HCT116 (cell line): ENCODE measurements at regions of chr7 and their contacts with region 1.

Region 1: GRCh38 chr7:18590744-18591340 is 95.3 kb downstream of the HDAC9 start:
- DNase-seq: peak; percentile 27
- ATAC-seq: peak; percentile 72
- H3K4me3 ChIP-seq: no peak overlapping the region
- H3K27ac ChIP-seq: no peak overlapping the region
- H3K4me1 ChIP-seq: no peaks in the 10 kb centered on the region
- H3K27me3 ChIP-seq: no peaks in the 10 kb centered on the region
- CTCF ChIP-seq: peak; percentile 51 to 67 (median 55); a peak in 4 of 6 replicates
- POLR2A ChIP-seq: no peak
- RAD21 ChIP-seq: peak; percentile 76

Region 2: DNA sequence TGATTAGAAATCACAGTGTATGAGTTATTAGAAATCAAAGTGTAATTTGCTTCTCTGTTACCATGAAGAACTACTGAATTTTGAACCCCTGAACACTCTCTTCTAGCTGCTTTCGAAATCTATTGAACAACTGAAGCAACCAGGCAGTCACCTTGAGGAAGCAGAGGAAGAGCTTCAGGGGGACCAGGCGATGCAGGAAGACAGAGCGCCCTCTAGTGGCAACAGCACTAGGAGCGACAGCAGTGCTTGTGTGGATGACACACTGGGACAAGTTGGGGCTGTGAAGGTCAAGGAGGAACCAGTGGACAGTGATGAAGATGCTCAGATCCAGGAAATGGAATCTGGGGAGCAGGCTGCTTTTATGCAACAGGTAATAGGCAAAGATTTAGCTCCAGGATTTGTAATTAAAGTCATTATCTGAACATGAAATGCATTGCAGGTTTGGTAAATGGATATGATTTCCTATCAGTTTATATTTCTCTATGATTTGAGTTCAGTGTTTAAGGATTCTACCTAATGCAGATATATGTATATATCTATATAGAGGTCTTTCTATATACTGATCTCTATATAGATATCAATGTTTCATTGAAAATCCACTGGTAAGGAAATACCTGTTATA is 75.4 kb after region 1 on chr7:
- CTCF ChIA-PET with region 1: no interaction called
- POLR2A ChIA-PET with region 1: no interaction called
- RAD21 ChIA-PET with region 1: interaction called in 1 of 2 experiments, 3 read pairs
- intact Hi-C with region 1: loop called (anchors 1 kb)
- DNase-seq: peak; percentile 78
- ATAC-seq: peak; percentile 98
- H3K4me3 ChIP-seq: no peak overlapping the region
- H3K27ac ChIP-seq: no peak overlapping the region
- H3K4me1 ChIP-seq: peaks cover 6 to 24% of the 10 kb centered on the region in 2 experiments
- H3K27me3 ChIP-seq: no peaks in the 10 kb centered on the region
- CTCF ChIP-seq: peak; percentile 67 to 97 (median 91); a peak in 5 of 6 replicates
- POLR2A ChIP-seq: no peak
- RAD21 ChIP-seq: peak; percentile 78

Region 3: GRCh38 chr7:18778594-18778993 is 187.8 kb after region 1 on chr7:
- CTCF ChIA-PET with region 1: no interaction called
- POLR2A ChIA-PET with region 1: no interaction called
- RAD21 ChIA-PET with region 1: no interaction called
- intact Hi-C with region 1: no loop called
- DNase-seq: no peak
- ATAC-seq: no peak
- H3K4me3 ChIP-seq: no peak overlapping the region
- H3K27ac ChIP-seq: no peak overlapping the region
- H3K4me1 ChIP-seq: no peaks in the 10 kb centered on the region
- H3K27me3 ChIP-seq: no peaks in the 10 kb centered on the region
- CTCF ChIP-seq: no peak
- POLR2A ChIP-seq: no peak
- RAD21 ChIP-seq: no peak

Region 4: DNA sequence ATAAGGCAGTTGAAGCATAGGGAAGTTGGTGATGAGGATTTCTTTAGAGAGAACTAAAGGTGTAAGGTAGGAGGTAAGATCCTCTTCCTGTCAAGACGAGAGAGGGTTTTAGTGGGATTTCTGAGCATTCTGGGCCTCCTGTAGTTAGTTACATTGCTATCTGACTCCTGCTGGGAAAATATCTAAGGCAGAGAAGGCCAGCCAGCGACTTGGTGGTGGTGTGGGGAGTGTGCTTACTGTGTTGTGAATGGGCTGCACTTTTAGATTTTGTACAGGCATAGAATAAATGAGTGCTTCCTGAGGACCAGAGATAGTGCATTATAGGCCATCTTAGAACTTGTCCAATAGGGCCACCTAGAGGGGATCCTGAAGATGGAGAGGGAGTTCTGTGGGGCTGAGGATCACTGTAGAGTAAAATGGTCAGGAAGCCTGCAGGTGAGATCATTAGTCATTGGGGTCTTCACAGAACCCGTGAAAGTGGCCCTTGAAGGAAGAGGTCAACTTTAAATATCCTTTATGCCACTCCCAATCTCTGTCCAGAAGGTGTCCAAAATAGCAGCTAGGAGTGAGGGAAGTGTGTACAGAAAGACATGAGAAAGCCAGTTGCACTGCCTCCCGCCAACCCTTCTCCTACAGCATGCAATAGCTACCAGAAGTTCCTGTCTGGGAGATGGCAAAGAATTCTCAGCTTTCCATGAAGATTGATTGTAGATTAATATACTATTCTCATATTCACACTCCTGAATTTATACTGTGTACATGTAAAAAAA is 851.4 kb after region 1 on chr7:
- CTCF ChIA-PET with region 1: no interaction called
- POLR2A ChIA-PET with region 1: no interaction called
- RAD21 ChIA-PET with region 1: no interaction called
- intact Hi-C with region 1: loop called (anchors 2 kb)
- DNase-seq: peak; percentile 50
- ATAC-seq: peak; percentile 99
- H3K4me3 ChIP-seq: no peak overlapping the region
- H3K27ac ChIP-seq: no peak overlapping the region
- H3K4me1 ChIP-seq: no peaks in the 10 kb centered on the region
- H3K27me3 ChIP-seq: no peaks in the 10 kb centered on the region
- CTCF ChIP-seq: peak; percentile 52 to 63 (median 58); a peak in 5 of 6 replicates
- POLR2A ChIP-seq: no peak
- RAD21 ChIP-seq: peak; percentile 79

Region 5: DNA sequence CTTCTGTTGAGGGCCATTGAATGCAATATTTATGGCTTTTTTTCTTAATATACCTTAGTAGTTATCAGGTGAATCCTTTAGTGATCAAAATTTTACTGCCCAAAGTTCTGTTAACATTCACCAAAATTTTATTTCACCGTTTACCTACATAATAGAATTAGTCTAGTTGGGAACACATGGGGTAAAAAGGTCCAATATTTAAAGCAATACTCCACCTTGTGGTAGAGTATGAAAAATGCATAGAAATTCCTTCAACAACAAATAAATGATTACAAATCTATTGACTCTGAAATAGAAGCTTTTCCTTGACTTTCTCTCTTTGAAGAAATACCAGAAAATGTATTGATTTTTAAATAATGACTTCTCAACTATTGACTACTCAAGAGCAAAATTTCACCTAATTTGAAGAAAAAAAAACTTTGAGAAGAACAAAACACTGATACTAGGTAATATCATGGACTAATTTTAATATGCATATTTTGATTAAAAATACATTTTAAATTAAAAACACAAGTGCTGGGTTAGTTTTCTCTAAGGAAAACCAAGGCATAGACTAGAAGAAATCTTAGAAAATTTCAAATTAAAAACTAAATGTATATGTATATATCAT is 1074.7 kb after region 1 on chr7:
- CTCF ChIA-PET with region 1: no interaction called
- POLR2A ChIA-PET with region 1: no interaction called
- RAD21 ChIA-PET with region 1: no interaction called
- intact Hi-C with region 1: loop called (anchors 2 kb)
- DNase-seq: peak; percentile 12
- ATAC-seq: no peak
- H3K4me3 ChIP-seq: no peak overlapping the region
- H3K27ac ChIP-seq: no peak overlapping the region
- H3K4me1 ChIP-seq: no peaks in the 10 kb centered on the region
- H3K27me3 ChIP-seq: no peaks in the 10 kb centered on the region
- CTCF ChIP-seq: peak; percentile 33 to 69 (median 42); a peak in 4 of 6 replicates
- POLR2A ChIP-seq: no peak
- RAD21 ChIP-seq: peak; percentile 69